Endothelial cell of umbilical vein (primary cell): ENCODE measurements at regions of chr7 and their contacts with region 1.

Region 1: GRCh38 chr7:123865517-123866117 is 20.6 kb downstream of the HYAL4 start:
- DNase-seq: peak; percentile 84
- H3K4me3 ChIP-seq: no peak overlapping the region
- H3K27ac ChIP-seq: peak overlapping the region; percentile 34
- H3K4me1 ChIP-seq: peaks cover 9% of the 10 kb centered on the region
- H3K27me3 ChIP-seq: no peaks in the 10 kb centered on the region
- CTCF ChIP-seq: peak; percentile 41 to 56
- POLR2A ChIP-seq: no peak

Region 2: GRCh38 chr7:123580406-123581161 is 285.0 kb before region 1 on chr7:
- CTCF ChIA-PET with region 1: interaction called, 15 read pairs
- POLR2A ChIA-PET with region 1: no interaction called
- dilution Hi-C with region 1: no loop called
- intact Hi-C with region 1: loop called (anchors 1 kb)
- DNase-seq: peak; percentile 61
- H3K4me3 ChIP-seq: no peak overlapping the region
- H3K27ac ChIP-seq: no peak overlapping the region
- H3K4me1 ChIP-seq: no peaks in the 10 kb centered on the region
- H3K27me3 ChIP-seq: no peaks in the 10 kb centered on the region
- CTCF ChIP-seq: peak; percentile 69 to 73
- POLR2A ChIP-seq: no peak

Region 3: DNA sequence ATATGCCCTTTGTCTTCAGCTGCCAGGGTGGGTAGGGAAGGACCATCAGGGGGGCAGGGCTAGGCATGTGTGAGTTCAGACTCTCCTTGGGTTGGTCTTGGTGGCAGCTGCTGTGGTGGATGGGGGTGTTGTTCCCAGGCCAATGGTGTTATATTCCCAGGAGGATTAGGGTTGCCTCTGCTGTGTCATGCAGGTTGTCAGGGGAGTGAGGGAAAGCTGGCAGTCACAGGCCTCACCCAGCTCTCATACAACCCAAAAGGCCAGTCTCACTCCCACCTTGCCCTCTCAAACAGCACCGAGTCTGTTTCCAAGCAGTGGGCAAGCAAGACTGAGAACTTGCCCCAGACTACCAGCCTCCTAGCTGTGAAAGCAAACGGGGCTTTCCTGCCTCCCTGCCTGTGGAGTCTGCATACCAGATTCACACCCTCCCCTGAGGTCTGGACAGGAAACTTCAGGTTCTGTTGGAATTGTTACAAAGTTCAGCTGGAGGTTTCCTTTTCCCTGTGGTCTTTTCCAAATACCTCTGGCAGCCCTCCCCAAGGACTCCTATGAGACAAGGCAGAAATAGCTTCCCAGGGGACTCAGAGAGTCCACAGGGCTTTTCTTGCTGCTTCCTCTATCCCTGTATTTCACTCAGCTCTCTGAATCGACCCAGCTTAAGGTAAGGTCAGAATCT is 19.3 kb before region 1 on chr7:
- CTCF ChIA-PET with region 1: interaction called, 14 read pairs
- POLR2A ChIA-PET with region 1: no interaction called
- dilution Hi-C with region 1: no loop called
- intact Hi-C with region 1: no loop called
- DNase-seq: peak; percentile 40
- H3K4me3 ChIP-seq: no peak overlapping the region
- H3K27ac ChIP-seq: no peak overlapping the region
- H3K4me1 ChIP-seq: no peaks in the 10 kb centered on the region
- H3K27me3 ChIP-seq: no peaks in the 10 kb centered on the region
- CTCF ChIP-seq: no peak
- POLR2A ChIP-seq: no peak